HEK293 (cell line): ENCODE measurements at regions of chr7 and their contacts with region 1.

Region 1: DNA sequence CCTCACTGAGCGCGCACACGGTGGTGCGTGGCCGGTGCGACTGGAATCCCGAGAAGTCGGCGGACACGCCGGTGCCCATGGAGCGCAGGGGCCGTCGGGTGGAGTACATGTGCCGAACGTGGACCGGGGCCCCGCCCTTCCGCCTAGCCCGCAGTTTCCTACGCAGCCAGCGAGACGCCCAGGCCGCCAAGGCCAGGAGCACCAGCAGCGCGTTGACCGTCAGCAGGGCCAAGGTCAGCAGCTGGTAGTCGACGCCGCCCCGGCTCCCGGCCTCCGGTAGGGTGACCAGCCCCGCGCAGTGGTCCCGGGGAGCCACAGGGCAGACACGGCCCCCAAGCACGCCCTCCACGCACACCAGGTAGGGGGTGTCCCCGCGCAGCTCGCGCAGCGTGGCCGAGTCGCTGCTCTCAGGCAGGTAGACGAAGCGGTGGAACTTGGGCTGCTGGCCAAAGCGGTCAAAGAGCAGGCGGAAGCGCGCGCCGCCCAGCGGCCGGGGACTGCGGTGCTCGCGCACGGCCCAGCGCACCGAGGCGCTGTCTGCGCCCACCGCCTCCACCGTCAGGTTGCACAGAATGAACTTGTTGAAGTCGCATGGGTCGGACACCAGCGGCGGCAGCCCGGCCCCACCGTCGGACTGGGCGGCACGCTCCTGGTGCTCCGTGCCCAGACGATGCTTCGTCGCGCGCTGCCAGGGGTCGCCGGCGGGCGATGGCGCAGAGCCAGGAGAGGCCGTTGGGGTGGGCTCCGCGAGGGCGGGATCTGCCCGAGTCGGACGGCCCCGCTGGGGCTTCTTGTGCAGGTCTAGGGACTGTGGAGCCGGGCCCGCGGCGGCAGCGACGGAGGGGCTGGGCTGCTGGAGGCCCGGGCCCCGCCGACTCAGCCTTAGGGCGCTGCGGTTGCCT is 2.2 kb downstream of the TRIL start:
- H3K4me3 ChIP-seq: peak overlapping the region; percentile 66
- H3K27ac ChIP-seq: peak overlapping the region; percentile 85; the same call in 1 of the 2 replicates
- H3K4me1 ChIP-seq: no peaks in the 10 kb centered on the region
- CTCF ChIP-seq: peak; percentile 84

Region 2: GRCh38 chr7:28933846-28934320 is 22.1 kb before region 1 on chr7:
- CTCF ChIA-PET with region 1: interaction called, 86 read pairs
- POLR2A ChIA-PET with region 1: no interaction called
- H3K4me3 ChIP-seq: no peak overlapping the region
- H3K27ac ChIP-seq: no peak overlapping the region
- H3K4me1 ChIP-seq: peaks cover 8% of the 10 kb centered on the region
- CTCF ChIP-seq: no peak

Region 3: GRCh38 chr7:28980451-28980891 is 24.5 kb after region 1 on chr7:
- CTCF ChIA-PET with region 1: interaction called, 10 read pairs
- POLR2A ChIA-PET with region 1: no interaction called
- H3K4me3 ChIP-seq: no peak overlapping the region
- H3K27ac ChIP-seq: no peak overlapping the region
- H3K4me1 ChIP-seq: no peaks in the 10 kb centered on the region; the same call in 1 of the 2 replicates
- CTCF ChIP-seq: no peak

Region 4: GRCh38 chr7:29113384-29114103 is 157.6 kb after region 1 on chr7:
- CTCF ChIA-PET with region 1: interaction called, 16 read pairs
- POLR2A ChIA-PET with region 1: no interaction called
- H3K4me3 ChIP-seq: no peak overlapping the region
- H3K27ac ChIP-seq: no peak overlapping the region
- H3K4me1 ChIP-seq: peaks cover 4% of the 10 kb centered on the region
- CTCF ChIP-seq: peak; percentile 43; the same call in 1 of the 2 replicates